Activated CD8-positive, alpha-beta T cell treated with anti-CD3 and anti-CD28 coated beads for 36 hours (primary cell): ENCODE measurements at regions of chr9 and their contacts with region 1.

Region 1: GRCh38 chr9:131678499-131679111 is 61.3 kb downstream of the RAPGEF1 start:
- DNase-seq: peak; percentile 94
- ATAC-seq: peak; percentile 99
- H3K4me3 Mint-ChIP-seq: peak overlapping the region; percentile 64
- H3K27ac Mint-ChIP-seq: peak overlapping the region; percentile 94
- H3K4me1 Mint-ChIP-seq: peaks cover 82% of the 10 kb centered on the region
- H3K27me3 Mint-ChIP-seq: no peaks in the 10 kb centered on the region
- CTCF ChIP-seq: no peak

Region 2: GRCh38 chr9:131590908-131591844 is 87.4 kb before region 1 on chr9:
- CTCF ChIA-PET with region 1: interaction called, 13 read pairs
- POLR2A ChIA-PET with region 1: no interaction called
- intact Hi-C with region 1: no loop called
- DNase-seq: peak; percentile 90
- ATAC-seq: peak; percentile 94
- H3K4me3 Mint-ChIP-seq: no peak overlapping the region
- H3K27ac Mint-ChIP-seq: peak overlapping the region; percentile 86
- H3K4me1 Mint-ChIP-seq: peaks cover 25% of the 10 kb centered on the region
- H3K27me3 Mint-ChIP-seq: no peaks in the 10 kb centered on the region
- CTCF ChIP-seq: peak; percentile 93

Region 3: DNA sequence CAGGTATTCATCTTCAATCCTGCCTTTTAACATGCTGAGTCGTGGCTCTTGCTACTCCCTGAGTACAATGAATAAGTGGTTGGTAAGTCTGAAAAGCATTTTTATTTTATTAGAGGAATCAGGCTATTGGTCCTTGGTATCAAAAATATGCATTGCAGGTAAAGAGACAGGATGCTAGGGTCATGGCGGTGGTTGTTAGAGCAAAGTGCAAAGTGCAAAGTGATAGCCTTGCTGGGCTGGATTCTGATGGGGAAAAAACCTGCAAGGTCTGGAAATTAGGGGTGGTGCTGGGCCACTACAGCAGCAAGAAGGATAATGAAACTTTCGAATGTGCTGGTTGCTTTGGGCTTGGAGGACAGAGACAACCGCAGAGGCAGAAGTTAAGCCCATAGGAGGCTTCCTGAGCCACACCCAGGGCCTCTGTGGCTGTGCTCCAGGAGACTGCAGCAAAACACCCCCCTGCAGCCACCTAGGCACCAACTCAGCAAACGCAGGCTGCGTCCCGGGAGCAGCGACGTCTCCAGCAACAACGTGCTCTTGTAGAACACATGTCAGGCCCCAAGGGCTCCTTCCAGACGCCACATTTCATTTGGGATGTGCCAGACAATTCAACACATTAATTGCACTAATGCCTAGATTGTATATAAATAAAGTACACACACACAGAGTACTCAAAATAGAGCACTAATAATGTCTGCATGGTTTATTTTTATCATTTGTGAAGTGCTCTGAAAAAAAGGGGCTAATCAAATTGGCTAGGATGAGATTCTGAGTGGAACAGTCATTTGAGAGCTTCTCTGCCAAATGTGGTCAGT is 211.0 kb after region 1 on chr9:
- CTCF ChIA-PET with region 1: no interaction called
- POLR2A ChIA-PET with region 1: no interaction called
- intact Hi-C with region 1: no loop called
- DNase-seq: no peak
- ATAC-seq: no peak
- H3K4me3 Mint-ChIP-seq: no peak overlapping the region
- H3K27ac Mint-ChIP-seq: no peak overlapping the region
- H3K4me1 Mint-ChIP-seq: no peaks in the 10 kb centered on the region
- H3K27me3 Mint-ChIP-seq: no peaks in the 10 kb centered on the region
- CTCF ChIP-seq: no peak